ENCODE measurements at regions of chr9 and their contacts with region 1.

Region 1: GRCh38 chr9:4339357-4339756 is 39.5 kb upstream of the GLIS3 start:
- DNase-seq: peak; percentile 61 to 88 (median 80)
- ATAC-seq: peak; percentile 92
- H3K4me3 ChIP-seq: no peak overlapping the region
- H3K4me3 Mint-ChIP-seq: peak overlapping the region; percentile 17
- H3K27ac ChIP-seq: no peak overlapping the region
- H3K27ac Mint-ChIP-seq: peak overlapping the region; percentile 50
- H3K4me1 ChIP-seq: peaks cover 3% of the 10 kb centered on the region
- H3K4me1 Mint-ChIP-seq: peaks cover 11% of the 10 kb centered on the region
- H3K27me3 ChIP-seq: no peaks in the 10 kb centered on the region
- H3K27me3 Mint-ChIP-seq: no peaks in the 10 kb centered on the region
- CTCF ChIP-seq: peak; percentile 70

Region 2: DNA sequence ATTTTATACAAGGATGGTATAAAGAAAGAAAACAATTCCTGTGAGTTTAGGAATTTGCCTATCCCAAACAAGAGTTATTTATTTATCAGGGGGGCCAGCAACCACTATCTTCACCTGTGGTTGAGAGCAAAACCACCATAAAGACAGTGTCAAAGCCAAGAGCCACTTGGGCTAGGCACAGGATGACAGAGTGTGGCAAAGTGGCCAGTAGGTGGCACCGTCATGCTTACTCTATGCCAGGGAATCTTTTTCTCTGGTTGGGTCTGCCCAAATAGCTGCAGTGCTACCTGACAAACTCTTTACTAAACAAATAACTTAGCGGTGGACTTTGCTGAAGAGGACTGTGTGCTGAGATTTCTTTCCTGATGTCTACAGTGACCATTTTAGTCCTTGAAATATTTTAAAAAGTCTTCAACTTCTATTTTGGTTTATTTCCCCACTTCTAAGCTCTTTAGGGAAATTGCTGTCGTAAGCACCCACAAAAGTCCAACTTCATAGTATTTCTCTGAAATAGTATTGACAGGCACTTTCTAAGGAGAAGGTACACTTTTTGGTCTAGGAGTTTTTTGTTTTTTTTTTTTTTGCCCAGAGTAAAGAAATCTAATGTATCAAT is 1098.6 kb before region 1 on chr9:
- CTCF ChIA-PET with region 1: no interaction called
- POLR2A ChIA-PET with region 1: no interaction called
- intact Hi-C with region 1: loop called in 1 of 2 experiments (anchors 2 kb)
- DNase-seq: peak; percentile 32 to 71 (median 59)
- ATAC-seq: peak; percentile 77
- H3K4me3 ChIP-seq: no peak overlapping the region
- H3K4me3 Mint-ChIP-seq: no peak overlapping the region
- H3K27ac ChIP-seq: no peak overlapping the region
- H3K27ac Mint-ChIP-seq: no peak overlapping the region
- H3K4me1 ChIP-seq: no peaks in the 10 kb centered on the region
- H3K4me1 Mint-ChIP-seq: no peaks in the 10 kb centered on the region
- H3K27me3 ChIP-seq: no peaks in the 10 kb centered on the region
- H3K27me3 Mint-ChIP-seq: no peaks in the 10 kb centered on the region
- CTCF ChIP-seq: peak; percentile 70

Region 3: DNA sequence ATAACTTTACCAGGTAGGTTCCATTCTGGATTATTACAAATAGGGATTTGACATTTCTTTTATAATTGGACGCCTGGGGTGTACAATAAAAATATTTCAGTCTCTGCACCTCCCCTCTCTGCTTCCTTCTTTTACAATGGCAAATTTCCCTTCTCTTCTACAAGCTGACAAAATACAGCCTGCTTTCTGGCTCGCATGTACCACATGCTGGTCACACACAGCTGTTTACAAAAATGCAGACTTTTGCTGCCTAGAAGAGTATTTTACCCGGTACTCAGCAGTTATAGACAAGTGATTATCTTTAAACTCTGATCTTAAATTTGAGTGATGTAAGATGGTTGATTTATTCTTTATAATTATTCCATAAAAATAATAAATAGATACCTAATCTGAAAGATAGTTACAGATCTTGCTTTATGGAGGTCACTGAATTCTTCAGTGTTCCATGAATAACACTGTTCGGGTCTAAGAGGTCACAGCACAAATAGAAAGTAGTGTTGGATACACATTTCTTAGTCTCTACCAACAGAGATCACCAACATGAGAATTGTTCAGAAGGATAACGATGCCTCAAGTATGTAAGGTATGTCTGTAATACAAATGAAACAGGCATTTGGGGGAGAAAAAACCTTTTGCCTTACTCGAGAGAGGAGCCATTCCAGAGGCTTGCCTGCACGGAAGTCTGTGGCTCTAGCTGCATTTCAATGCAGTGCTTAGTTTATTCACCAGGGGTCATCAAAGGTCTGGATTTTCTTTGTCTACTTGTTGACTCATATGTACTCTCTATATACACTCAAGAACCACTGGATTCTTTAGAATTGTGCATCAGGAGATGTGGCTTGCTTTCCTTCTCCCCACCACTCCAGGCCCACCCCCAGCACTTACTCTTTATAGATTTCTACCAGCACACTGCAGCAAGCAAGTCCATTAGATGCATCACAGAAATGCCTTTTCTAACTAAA is 607.0 kb before region 1 on chr9:
- CTCF ChIA-PET with region 1: interaction called, 15 read pairs
- POLR2A ChIA-PET with region 1: no interaction called
- intact Hi-C with region 1: loop called in 1 of 2 experiments (anchors 1 kb)
- DNase-seq: peak in 6 of 9 experiments; percentile 1 to 67 (median 18)
- ATAC-seq: peak; percentile 97
- H3K4me3 ChIP-seq: no peak overlapping the region
- H3K4me3 Mint-ChIP-seq: peak overlapping the region; percentile 42
- H3K27ac ChIP-seq: no peak overlapping the region
- H3K27ac Mint-ChIP-seq: no peak overlapping the region
- H3K4me1 ChIP-seq: no peaks in the 10 kb centered on the region
- H3K4me1 Mint-ChIP-seq: peaks cover 12% of the 10 kb centered on the region
- H3K27me3 ChIP-seq: no peaks in the 10 kb centered on the region
- H3K27me3 Mint-ChIP-seq: peaks cover 2% of the 10 kb centered on the region
- CTCF ChIP-seq: peak; percentile 52

Region 4: GRCh38 chr9:4035777-4036176 is 303.6 kb before region 1 on chr9:
- CTCF ChIA-PET with region 1: no interaction called
- POLR2A ChIA-PET with region 1: no interaction called
- intact Hi-C with region 1: no loop called
- DNase-seq: no peak
- ATAC-seq: no peak
- H3K4me3 ChIP-seq: no peak overlapping the region
- H3K4me3 Mint-ChIP-seq: no peak overlapping the region
- H3K27ac ChIP-seq: no peak overlapping the region
- H3K27ac Mint-ChIP-seq: no peak overlapping the region
- H3K4me1 ChIP-seq: no peaks in the 10 kb centered on the region
- H3K4me1 Mint-ChIP-seq: no peaks in the 10 kb centered on the region
- H3K27me3 ChIP-seq: no peaks in the 10 kb centered on the region
- H3K27me3 Mint-ChIP-seq: no peaks in the 10 kb centered on the region
- CTCF ChIP-seq: no peak

Region 5: DNA sequence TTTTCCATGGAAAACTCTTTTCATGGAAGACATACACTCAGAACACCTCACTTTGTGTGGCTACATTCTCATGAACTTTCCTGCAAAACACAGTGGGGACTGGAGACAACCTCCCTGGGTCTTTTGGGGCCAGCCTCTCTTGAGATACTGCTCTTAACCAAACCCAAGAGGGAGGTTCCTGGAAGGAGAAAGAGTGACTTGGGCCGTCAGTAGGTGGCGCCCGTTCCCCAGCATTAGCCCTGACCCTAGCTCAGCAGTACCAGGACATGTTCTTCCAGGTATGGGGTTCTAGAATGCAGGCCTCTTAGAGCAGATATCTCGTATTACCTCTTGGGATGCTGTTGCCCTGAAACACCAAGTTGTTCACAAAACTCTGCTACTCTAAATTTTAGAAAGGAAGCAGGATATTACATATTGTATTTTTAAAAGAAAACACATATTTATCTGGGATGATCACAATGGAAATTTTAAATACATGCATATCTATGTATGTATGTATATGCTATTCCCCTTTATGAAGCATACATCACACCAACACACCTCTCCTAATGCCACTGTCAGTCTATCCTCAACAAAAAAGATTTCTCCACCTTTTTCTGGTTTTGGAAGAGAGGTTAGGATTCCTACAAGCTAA is 23.7 kb before region 1 on chr9:
- CTCF ChIA-PET with region 1: interaction called, 266 read pairs
- POLR2A ChIA-PET with region 1: interaction called, 4 read pairs
- intact Hi-C with region 1: loop called (anchors 1 to 2 kb)
- DNase-seq: peak; percentile 42 to 85 (median 72)
- ATAC-seq: peak; percentile 90
- H3K4me3 ChIP-seq: no peak overlapping the region
- H3K4me3 Mint-ChIP-seq: no peak overlapping the region
- H3K27ac ChIP-seq: no peak overlapping the region
- H3K27ac Mint-ChIP-seq: no peak overlapping the region
- H3K4me1 ChIP-seq: peaks cover 19% of the 10 kb centered on the region
- H3K4me1 Mint-ChIP-seq: peaks cover 19% of the 10 kb centered on the region
- H3K27me3 ChIP-seq: no peaks in the 10 kb centered on the region
- H3K27me3 Mint-ChIP-seq: peaks cover 5% of the 10 kb centered on the region
- CTCF ChIP-seq: peak; percentile 76

Region 6: GRCh38 chr9:4572184-4572826 is 232.9 kb after region 1 on chr9:
- CTCF ChIA-PET with region 1: no interaction called
- POLR2A ChIA-PET with region 1: no interaction called
- intact Hi-C with region 1: no loop called
- DNase-seq: peak in 5 of 9 experiments; percentile 22 to 59 (median 40)
- ATAC-seq: peak; percentile 58
- H3K4me3 ChIP-seq: no peak overlapping the region
- H3K4me3 Mint-ChIP-seq: peak overlapping the region; percentile 33
- H3K27ac ChIP-seq: no peak overlapping the region
- H3K27ac Mint-ChIP-seq: peak overlapping the region; percentile 76
- H3K4me1 ChIP-seq: peaks cover 13% of the 10 kb centered on the region
- H3K4me1 Mint-ChIP-seq: peaks cover 35% of the 10 kb centered on the region
- H3K27me3 ChIP-seq: no peaks in the 10 kb centered on the region
- H3K27me3 Mint-ChIP-seq: no peaks in the 10 kb centered on the region
- CTCF ChIP-seq: no peak

Region 7: GRCh38 chr9:5408596-5408995 is 1069.2 kb after region 1 on chr9:
- CTCF ChIA-PET with region 1: no interaction called
- POLR2A ChIA-PET with region 1: no interaction called
- intact Hi-C with region 1: no loop called
- DNase-seq: no peak
- ATAC-seq: no peak
- H3K4me3 ChIP-seq: no peak overlapping the region
- H3K4me3 Mint-ChIP-seq: no peak overlapping the region
- H3K27ac ChIP-seq: no peak overlapping the region
- H3K27ac Mint-ChIP-seq: no peak overlapping the region
- H3K4me1 ChIP-seq: no peaks in the 10 kb centered on the region
- H3K4me1 Mint-ChIP-seq: peaks cover 6% of the 10 kb centered on the region
- H3K27me3 ChIP-seq: no peaks in the 10 kb centered on the region
- H3K27me3 Mint-ChIP-seq: no peaks in the 10 kb centered on the region
- CTCF ChIP-seq: no peak

Measured in CD8-positive, alpha-beta T cell (primary cell).